Calu3 (cell line): ENCODE measurements at regions of chr17 and their contacts with region 1.

Region 1: DNA sequence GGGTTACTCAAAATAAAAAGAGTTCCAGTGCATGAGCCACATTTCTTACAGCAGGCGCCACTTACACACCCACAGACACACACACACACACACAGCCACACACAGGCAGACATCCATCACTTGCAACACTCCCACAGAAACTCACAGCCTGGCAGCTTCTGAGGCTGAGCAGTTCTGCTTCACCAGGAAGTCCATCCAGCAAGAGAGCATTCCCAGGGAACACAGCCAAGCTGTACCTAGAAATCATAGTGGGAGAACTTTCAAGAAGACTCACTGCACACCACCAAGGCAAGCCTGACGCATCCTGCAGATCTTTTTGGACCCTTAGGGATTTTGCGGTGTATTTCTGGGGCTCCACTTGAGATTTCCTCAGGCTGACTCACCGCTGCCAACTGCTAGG is 140.9 kb upstream of the WSB1 start:
- DNase-seq: no peak
- H3K4me3 Mint-ChIP-seq: no peak overlapping the region
- H3K27ac Mint-ChIP-seq: no peak overlapping the region
- H3K4me1 Mint-ChIP-seq: no peaks in the 10 kb centered on the region
- H3K27me3 Mint-ChIP-seq: no peaks in the 10 kb centered on the region
- CTCF ChIP-seq: no peak

Region 2: DNA sequence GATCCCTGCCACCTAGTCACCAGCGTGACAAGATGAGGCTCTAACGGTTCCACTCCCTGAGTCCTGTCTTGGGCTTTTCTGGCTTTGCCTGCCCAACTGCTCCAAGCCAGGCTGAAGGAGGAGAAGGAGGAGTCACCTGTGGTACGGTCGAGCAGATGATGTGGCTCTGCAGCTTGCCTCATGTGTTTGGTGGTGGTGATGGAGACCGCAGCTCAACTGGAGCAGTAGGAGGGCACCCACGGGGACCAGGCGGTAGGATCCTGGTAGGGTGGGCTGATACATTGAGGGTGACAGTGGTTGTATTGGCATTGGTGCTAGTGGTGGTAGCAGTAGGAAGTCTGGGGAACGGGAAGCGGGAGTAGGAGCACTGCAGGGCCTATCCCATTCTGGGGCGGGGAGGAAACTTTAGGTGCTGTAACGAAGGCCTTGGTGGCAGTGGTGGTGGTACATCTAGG is 61.9 kb before region 1 on chr17:
- CTCF ChIA-PET with region 1: no interaction called
- intact Hi-C with region 1: loop called (anchors 10 kb)
- DNase-seq: no peak
- H3K4me3 Mint-ChIP-seq: no peak overlapping the region
- H3K27ac Mint-ChIP-seq: no peak overlapping the region
- H3K4me1 Mint-ChIP-seq: no peaks in the 10 kb centered on the region
- H3K27me3 Mint-ChIP-seq: peaks cover 21% of the 10 kb centered on the region
- CTCF ChIP-seq: no peak